ENCODE measurements at regions of chr13 and their contacts with region 1.

Region 1: DNA sequence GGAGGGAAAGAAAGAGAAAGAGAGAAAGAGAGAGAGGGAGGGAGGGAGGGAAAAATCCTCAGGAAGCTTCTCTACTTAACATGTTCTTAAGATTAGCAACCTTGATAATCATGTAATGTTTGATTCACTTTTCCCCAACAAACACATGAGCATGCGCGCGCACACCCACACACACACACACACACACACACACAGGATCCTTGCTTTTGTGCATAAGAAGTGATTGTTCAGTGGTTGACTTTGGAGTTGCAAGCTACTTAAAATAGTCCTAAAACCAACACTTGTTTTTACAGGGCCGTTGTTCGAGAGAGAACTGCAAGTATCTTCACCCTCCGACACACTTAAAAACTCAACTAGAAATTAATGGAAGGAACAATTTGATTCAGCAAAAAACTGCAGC is 100.0 kb upstream of the RAP2A start:
- DNase-seq: no peak

Region 2: GRCh38 chr13:97295283-97296182 is 38.5 kb before region 1 on chr13:
- intact Hi-C with region 1: loop called in 1 of 2 experiments (anchors 5 kb)
- DNase-seq: no peak

Measured in posterior vena cava (tissue), 2 donors.